Mammary epithelial cell (primary cell): ENCODE measurements at regions of chr5 and their contacts with region 1.

Region 1: GRCh38 chr5:141564216-141564692 is 54.5 kb downstream of the DIAPH1 start:
- DNase-seq: peak; percentile 85
- H3K4me3 ChIP-seq: no peak overlapping the region
- H3K27ac ChIP-seq: peak overlapping the region; percentile 68
- H3K4me1 ChIP-seq: peaks cover 14% of the 10 kb centered on the region
- H3K27me3 ChIP-seq: no peaks in the 10 kb centered on the region
- CTCF ChIP-seq: peak; percentile 82 to 99

Region 2: DNA sequence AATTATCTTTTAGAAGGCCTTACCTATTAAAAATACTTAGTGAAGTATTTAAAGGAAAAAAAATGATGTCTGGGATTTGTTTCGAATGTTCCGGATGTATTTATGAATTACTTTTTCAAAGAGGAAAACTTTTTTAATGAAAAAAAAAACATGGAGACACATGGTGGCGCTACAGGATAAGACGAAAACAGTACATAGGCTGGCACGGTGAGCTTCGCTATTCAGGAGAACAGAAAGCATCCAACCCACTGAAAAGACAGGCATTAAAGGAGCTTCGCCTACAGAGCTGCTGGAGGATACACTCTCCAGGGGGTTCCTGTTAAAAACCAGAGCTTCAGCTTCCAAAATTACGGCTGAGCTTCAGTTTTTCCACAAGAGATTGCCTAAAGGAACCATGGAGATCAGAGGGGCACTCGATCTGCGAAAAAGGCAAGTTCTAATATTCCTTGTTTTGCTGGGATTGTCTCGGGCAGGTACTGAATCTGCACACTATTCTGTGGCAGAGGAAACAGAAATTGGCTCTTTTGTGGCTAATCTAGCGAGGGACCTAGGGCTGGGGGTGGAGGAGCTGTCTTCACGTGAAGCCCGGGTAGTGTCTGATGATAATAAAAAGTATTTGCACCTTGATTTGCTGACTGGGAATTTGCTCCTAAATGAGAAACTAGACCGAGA is 341.0 kb before region 1 on chr5 and contains the start of gene PCDHB14:
- CTCF ChIA-PET with region 1: interaction called, 16 read pairs
- dilution Hi-C with region 1: no loop called
- in situ Hi-C with region 1: loop called (anchors 10 to 25 kb)
- intact Hi-C with region 1: loop called (anchors 1 kb)
- DNase-seq: peak; percentile 65
- H3K4me3 ChIP-seq: peak within 1 kb of the TSS in 2 of 3 experiments; percentile 17 to 32
- H3K27ac ChIP-seq: no peak within 1 kb of the TSS
- H3K4me1 ChIP-seq: no peaks in the 10 kb centered on the region
- H3K27me3 ChIP-seq: no peaks in the 10 kb centered on the region
- CTCF ChIP-seq: peak in 1 of 2 donors; percentile 38
- total RNA-seq, gene PCDHB14: 1.4 to 1.7 TPM

Region 3: DNA sequence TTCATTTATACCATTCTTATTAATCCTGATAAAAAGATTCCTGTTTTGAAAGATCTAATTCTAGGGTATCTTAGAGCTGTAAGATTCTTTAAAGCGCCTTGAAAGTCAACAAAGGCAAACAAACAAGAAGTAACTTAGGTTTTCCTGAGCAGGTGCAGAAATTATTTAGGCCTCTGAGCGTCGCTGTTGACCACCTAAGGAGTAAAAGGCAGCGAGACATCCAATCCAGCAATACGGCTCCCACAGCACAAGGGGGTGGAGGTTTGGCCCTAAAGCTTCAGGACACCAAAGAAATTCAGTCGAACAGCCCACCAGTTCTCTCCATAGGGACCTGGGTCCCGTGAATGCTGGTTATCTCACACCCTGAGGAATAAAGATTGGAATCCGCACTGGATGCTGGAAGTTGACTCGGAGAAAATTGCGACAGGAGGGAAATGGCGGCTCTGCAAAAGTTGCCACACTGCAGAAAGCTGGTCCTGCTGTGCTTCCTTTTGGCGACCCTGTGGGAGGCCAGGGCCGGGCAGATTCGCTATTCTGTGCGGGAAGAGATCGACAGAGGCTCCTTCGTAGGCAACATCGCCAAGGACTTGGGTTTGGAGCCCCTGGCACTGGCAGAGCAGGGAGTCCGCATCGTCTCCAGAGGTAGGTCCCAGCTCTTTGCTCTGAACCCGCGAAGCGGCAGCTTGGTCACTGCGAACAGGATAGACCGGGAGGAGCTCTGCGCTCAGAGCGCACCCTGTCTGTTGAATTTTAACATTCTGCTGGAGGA is 225.5 kb before region 1 on chr5 and contains the start of gene PCDHGA2:
- CTCF ChIA-PET with region 1: interaction called, 5 read pairs
- dilution Hi-C with region 1: no loop called
- in situ Hi-C with region 1: no loop called
- intact Hi-C with region 1: loop called (anchors 1 kb)
- DNase-seq: peak; percentile 37
- H3K4me3 ChIP-seq: peak within 1 kb of the TSS; percentile 46 to 57 (median 46)
- H3K27ac ChIP-seq: no peak within 1 kb of the TSS
- H3K4me1 ChIP-seq: no peaks in the 10 kb centered on the region
- H3K27me3 ChIP-seq: no peaks in the 10 kb centered on the region
- CTCF ChIP-seq: peak; percentile 65 to 71
- total RNA-seq, gene PCDHGA2: 1.7 to 3.0 TPM

Region 4: GRCh38 chr5:141369994-141370848 is 194.0 kb before region 1 on chr5 and contains the start of gene PCDHGB3:
- CTCF ChIA-PET with region 1: interaction called, 13 read pairs
- dilution Hi-C with region 1: no loop called
- in situ Hi-C with region 1: no loop called
- intact Hi-C with region 1: loop called (anchors 5 kb)
- DNase-seq: peak; percentile 12
- H3K4me3 ChIP-seq: peak within 1 kb of the TSS in 2 of 3 experiments; percentile 4 to 26
- H3K27ac ChIP-seq: no peak within 1 kb of the TSS
- H3K4me1 ChIP-seq: no peaks in the 10 kb centered on the region
- H3K27me3 ChIP-seq: peaks cover 1% of the 10 kb centered on the region
- CTCF ChIP-seq: peak; percentile 28 to 40
- total RNA-seq, gene PCDHGB3: 1.8 to 4.2 TPM

Region 5: GRCh38 chr5:141392429-141393198 is 171.6 kb before region 1 on chr5 and contains the start of gene PCDHGA8:
- CTCF ChIA-PET with region 1: interaction called, 3 read pairs
- dilution Hi-C with region 1: no loop called
- in situ Hi-C with region 1: loop called (anchors 10 kb)
- intact Hi-C with region 1: loop called (anchors 5 kb)
- DNase-seq: no peak
- H3K4me3 ChIP-seq: peak within 1 kb of the TSS; percentile 26 to 41 (median 36)
- H3K27ac ChIP-seq: no peak within 1 kb of the TSS
- H3K4me1 ChIP-seq: no peaks in the 10 kb centered on the region
- H3K27me3 ChIP-seq: no peaks in the 10 kb centered on the region
- CTCF ChIP-seq: peak; percentile 31 to 36
- total RNA-seq, gene PCDHGA8: 0.87 to 1.7 TPM

Region 6: DNA sequence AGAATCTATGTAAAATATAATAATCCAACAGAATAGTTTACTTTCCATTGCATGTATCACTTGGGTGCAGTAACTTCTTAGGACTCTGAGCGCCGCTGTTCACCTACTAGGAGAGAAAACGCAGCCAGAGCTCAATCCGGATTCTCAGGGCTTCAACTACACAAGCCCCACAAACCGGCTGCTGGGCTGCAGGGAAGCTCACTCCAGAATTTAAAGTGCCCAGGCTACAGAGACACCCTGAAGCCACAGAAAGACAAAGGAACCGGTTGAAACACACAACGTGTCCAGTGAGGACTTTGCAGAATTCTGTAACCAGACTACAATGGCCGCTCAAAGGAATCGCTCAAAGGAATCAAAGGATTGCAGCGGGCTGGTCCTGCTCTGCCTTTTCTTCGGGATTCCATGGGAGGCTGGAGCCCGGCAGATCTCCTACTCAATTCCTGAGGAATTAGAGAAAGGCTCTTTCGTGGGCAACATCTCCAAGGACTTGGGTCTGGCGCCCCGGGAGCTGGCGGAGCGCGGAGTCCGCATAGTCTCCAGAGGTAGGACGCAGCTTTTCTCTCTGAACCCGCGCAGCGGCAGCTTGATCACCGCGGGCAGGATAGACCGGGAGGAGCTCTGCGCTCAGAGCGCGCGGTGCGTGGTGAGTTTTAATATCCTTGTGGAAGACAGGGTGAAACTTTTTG is 151.3 kb before region 1 on chr5 and contains the start of gene PCDHGA10:
- CTCF ChIA-PET with region 1: interaction called, 13 read pairs
- dilution Hi-C with region 1: no loop called
- in situ Hi-C with region 1: no loop called
- intact Hi-C with region 1: loop called (anchors 1 kb)
- DNase-seq: peak; percentile 34
- H3K4me3 ChIP-seq: no peak within 1 kb of the TSS
- H3K27ac ChIP-seq: no peak within 1 kb of the TSS
- H3K4me1 ChIP-seq: no peaks in the 10 kb centered on the region
- H3K27me3 ChIP-seq: no peaks in the 10 kb centered on the region
- CTCF ChIP-seq: no peak
- total RNA-seq, gene PCDHGA10: 7.8 to 7.9 TPM

Region 7: DNA sequence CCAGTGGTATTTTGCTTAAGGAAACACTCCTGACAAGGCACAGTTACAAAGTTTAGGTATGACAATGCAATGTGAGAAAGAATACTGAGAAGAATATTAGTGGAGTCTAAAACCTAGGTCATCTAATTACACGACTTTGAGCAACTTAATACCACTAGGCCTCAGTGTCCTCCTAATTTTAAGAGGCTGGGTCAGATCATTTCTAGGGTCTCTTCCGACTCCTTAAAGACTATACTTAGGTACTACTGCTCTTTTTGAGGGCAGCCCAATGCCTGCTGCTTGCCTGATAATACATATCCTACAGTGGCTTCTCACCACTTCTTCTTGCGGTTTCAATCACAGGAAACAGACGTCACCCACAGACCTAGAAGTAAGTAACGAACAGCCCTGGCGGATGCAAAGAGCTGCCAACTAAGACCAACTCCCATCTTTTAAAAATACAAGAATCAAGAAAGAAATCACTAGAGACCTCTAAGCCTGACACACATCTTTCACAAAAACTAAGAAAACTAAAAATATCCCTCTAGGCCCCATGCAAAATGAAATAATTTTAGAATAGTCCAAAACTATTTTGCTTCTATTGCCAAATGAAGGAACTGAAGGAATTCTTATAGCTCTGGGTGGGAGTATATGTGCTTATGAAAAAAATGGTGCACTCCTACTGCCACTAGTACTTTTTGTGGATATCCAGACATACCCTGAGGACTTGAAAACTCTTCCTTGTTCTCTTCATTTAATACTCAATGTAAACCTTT is 41.4 kb after region 1 on chr5:
- CTCF ChIA-PET with region 1: no interaction called
- dilution Hi-C with region 1: no loop called
- in situ Hi-C with region 1: no loop called
- intact Hi-C with region 1: no loop called
- DNase-seq: no peak
- H3K4me3 ChIP-seq: no peak overlapping the region
- H3K27ac ChIP-seq: peak overlapping the region; percentile 98
- H3K4me1 ChIP-seq: peaks cover 14% of the 10 kb centered on the region
- H3K27me3 ChIP-seq: no peaks in the 10 kb centered on the region
- CTCF ChIP-seq: no peak

Region 8: DNA sequence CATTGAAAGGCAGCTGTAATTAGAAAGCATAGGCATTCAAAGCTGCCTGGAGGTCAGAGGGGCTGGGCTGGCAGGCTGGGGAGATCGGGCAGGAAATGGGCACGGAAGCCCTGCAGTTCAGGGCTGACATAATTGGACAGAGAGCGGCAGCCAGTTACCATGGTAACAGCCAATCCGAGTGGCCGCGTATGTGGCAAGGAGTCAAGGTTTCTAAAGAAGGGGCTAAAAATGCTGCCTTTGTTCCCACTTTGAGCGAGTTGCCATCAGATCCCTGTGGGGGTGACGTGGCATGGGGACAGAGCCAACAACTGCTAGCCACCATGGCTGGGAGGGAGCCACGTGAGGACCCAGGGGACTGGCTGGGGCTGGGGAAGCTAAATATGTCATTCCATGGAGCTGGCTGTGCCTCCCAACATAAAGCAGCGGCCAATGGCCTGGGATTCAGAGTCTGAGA is 499.7 kb after region 1 on chr5:
- CTCF ChIA-PET with region 1: no interaction called
- dilution Hi-C with region 1: no loop called
- in situ Hi-C with region 1: no loop called
- intact Hi-C with region 1: no loop called
- DNase-seq: peak; percentile 28
- H3K4me3 ChIP-seq: no peak overlapping the region
- H3K27ac ChIP-seq: no peak overlapping the region
- H3K4me1 ChIP-seq: peaks cover 5% of the 10 kb centered on the region
- H3K27me3 ChIP-seq: no peaks in the 10 kb centered on the region
- CTCF ChIP-seq: no peak